Lower leg skin (tissue), 4 donors: ENCODE measurements at regions of chr5 and their contacts with region 1.

Region 1: DNA sequence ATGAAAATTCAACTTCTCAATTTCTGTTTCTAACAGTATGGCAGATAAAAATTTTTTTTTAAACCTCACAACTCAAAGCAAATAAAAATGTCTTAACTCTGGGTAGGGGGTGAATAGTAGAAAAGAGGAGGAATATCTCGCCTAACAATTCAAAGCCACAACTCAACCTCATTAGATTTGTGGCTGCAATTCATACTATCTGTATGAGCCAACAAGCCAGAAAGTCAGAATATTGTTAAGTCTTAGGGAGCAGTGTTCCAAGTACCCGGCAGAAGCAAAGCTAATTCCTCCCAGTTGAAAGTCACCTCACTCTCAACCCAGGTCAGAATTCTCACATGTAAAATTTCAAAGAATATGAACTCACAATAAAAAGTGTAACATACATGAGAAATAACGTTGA is 15.0 kb downstream of the PJA2 start:
- DNase-seq: no peak
- H3K4me3 ChIP-seq: no peak overlapping the region
- CTCF ChIP-seq: no peak
- POLR2A ChIP-seq: no peak

Region 2: DNA sequence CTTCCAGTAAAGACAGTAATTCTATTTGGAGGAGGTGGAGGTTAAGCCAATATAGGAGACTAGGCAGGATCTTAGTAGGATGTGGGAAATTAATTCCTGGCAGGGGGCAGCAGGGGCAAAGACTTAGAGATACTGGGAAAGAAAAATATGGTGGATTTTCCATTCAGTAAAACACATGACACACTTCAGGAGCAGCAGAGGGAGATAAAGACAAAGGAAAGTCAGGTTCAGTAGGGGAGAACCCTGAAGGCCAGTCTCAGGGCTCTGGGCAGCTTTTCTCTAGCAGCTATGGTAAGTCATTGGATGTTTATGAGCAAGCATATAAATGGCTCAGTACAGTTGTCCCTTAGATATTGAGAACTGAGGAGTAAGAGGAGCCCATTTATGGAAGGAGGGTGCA is 90.5 kb before region 1 on chr5:
- intact Hi-C with region 1: no loop called
- DNase-seq: no peak
- H3K4me3 ChIP-seq: no peak overlapping the region
- CTCF ChIP-seq: no peak
- POLR2A ChIP-seq: no peak

Region 3: DNA sequence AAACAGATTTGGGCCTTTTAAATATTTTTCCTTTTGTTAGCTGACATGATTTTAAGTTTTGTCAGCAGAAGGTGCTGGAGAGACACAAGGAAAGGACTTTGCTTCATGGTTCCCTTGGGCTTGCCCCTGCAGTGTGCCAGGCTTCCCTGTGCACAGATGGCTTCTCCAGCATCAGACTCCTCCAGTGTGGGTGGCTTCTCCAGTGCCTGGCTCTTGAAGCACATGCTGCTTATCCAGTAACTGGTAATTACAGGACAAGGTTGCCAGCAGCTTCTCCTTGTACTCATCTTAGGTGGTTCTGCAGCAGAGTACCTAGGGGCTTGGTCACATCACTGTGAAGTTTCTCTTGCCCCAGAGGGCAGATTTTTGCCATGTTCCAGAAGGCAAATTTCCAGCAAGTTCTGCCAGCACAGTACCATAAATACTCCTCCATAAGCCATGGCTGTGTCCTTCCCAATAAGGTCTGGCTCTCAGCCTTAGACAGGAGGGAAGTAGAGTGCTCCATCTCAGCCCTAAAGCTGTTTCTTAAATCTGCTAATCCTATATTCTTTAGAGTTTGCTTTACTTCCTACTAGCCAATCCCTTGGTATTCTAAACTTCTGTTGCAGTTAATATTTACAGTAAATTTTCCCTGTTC is 47.4 kb before region 1 on chr5:
- intact Hi-C with region 1: loop called (anchors 5 kb)
- DNase-seq: no peak
- H3K4me3 ChIP-seq: no peak overlapping the region
- CTCF ChIP-seq: no peak
- POLR2A ChIP-seq: no peak